ENCODE measurements at regions of chr16 and their contacts with region 1.

Region 1: GRCh38 chr16:89706507-89707263 is 5.2 kb upstream of the SPATA2L start:
- DNase-seq: no peak
- ATAC-seq: no peak
- H3K4me3 ChIP-seq: no peak overlapping the region
- H3K4me3 Mint-ChIP-seq: no peak overlapping the region
- H3K27ac ChIP-seq: no peak overlapping the region
- H3K27ac Mint-ChIP-seq: no peak overlapping the region
- H3K4me1 ChIP-seq: peaks cover 2 to 33% of the 10 kb centered on the region in 2 experiments
- H3K4me1 Mint-ChIP-seq: peaks cover 8 to 15% (median 12%) of the 10 kb centered on the region in 3 donors
- H3K27me3 ChIP-seq: peaks cover 0 to 3% of the 10 kb centered on the region in 2 experiments
- H3K27me3 Mint-ChIP-seq: no peaks in the 10 kb centered on the region

Region 2: DNA sequence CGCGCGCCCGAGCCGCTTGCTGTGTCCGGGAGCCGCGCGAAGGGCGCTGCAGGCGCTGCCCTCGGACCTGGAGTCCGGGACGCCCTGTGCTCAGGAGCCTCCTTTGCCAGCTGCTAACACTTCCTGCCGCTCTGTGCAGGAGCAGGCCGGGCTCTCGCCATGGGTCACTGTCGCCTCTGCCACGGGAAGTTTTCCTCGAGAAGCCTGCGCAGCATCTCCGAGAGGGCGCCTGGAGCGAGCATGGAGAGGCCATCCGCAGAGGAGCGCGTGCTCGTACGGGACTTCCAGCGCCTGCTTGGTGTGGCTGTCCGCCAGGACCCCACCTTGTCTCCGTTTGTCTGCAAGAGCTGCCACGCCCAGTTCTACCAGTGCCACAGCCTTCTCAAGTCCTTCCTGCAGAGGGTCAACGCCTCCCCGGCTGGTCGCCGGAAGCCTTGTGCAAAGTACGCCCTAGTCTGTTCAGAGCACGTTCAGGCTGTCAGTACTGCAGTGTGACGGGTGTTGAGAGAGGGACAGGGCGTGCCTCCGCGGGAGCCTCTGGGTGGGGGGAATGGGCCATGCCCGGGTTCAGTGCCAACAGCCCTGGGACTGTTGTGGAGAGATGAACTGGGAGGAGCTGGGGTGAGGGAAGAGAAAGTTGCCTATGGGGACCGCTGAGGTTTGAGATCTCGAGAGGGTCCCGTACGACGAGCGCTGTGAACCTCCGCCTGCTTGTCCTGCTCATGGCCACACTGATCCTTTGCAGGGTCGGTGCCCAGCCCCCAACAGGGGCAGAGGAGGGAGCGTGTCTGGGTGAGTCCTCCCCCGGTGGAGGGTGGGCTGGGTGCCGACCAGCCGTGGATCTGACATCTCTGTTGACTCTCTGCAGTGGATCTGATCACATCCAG is 15.9 kb after region 1 on chr16:
- CTCF ChIA-PET with region 1: interaction called in 1 of 2 experiments, 11 read pairs
- POLR2A ChIA-PET with region 1: no interaction called
- DNase-seq: peak; percentile 46 to 83 (median 68)
- ATAC-seq: peak; percentile 30 to 44 (median 39)
- H3K4me3 ChIP-seq: peak overlapping the region; percentile 70 to 81
- H3K4me3 Mint-ChIP-seq: peak overlapping the region; percentile 84 to 99 (median 96)
- H3K27ac ChIP-seq: peak overlapping the region; percentile 76
- H3K27ac Mint-ChIP-seq: peak overlapping the region; percentile 96 to 99
- H3K4me1 ChIP-seq: peaks cover 16 to 65% of the 10 kb centered on the region in 2 experiments
- H3K4me1 Mint-ChIP-seq: peaks cover 45 to 58% (median 50%) of the 10 kb centered on the region in 3 donors
- H3K27me3 ChIP-seq: no peaks in the 10 kb centered on the region
- H3K27me3 Mint-ChIP-seq: no peaks in the 10 kb centered on the region

Region 3: DNA sequence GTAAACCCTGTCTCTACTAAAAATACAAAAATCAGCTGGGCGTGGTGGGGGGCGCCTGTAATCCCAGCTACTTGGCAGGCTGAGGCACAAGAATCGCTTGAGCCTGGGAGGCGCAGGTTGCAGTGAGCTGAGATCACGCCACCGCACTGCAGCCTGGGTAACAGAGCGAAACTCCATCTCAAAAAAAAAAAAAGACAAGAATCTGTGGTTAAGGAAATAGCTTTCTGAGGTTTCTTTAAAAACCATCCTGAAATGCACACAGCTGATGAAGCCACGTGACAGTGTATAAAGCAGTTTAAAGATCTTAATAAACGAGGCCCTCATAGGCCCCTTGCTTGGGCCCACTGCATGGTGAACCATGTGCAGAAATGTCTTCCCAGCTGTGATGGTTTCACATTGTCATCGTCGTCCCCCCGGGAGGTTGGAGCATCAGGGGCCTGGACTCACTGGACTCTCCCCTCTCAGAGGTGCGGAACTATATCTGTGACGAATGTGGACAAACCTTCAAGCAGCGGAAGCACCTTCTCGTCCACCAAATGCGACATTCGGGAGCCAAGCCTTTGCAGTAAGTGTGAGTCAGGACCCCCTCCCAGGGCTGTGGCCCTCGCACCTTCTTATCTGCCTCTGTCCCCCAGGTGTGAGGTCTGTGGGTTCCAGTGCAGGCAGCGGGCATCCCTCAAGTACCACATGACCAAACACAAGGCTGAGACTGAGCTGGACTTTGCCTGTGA is 30.8 kb after region 1 on chr16:
- CTCF ChIA-PET with region 1: interaction called in 1 of 2 experiments, 12 read pairs
- POLR2A ChIA-PET with region 1: interaction called in 1 of 2 experiments, 3 read pairs
- DNase-seq: peak in 33 of 35 experiments; percentile 32 to 77 (median 50)
- ATAC-seq: peak; percentile 54 to 86 (median 61)
- H3K4me3 ChIP-seq: no peak overlapping the region
- H3K4me3 Mint-ChIP-seq: peak overlapping the region in 2 of 3 donors; percentile 3 to 53
- H3K27ac ChIP-seq: peak overlapping the region; percentile 36
- H3K27ac Mint-ChIP-seq: peak overlapping the region; percentile 65 to 80
- H3K4me1 ChIP-seq: peaks cover 21 to 71% of the 10 kb centered on the region in 2 experiments
- H3K4me1 Mint-ChIP-seq: peaks cover 44 to 64% (median 46%) of the 10 kb centered on the region in 3 donors
- H3K27me3 ChIP-seq: no peaks in the 10 kb centered on the region
- H3K27me3 Mint-ChIP-seq: no peaks in the 10 kb centered on the region

Region 4: DNA sequence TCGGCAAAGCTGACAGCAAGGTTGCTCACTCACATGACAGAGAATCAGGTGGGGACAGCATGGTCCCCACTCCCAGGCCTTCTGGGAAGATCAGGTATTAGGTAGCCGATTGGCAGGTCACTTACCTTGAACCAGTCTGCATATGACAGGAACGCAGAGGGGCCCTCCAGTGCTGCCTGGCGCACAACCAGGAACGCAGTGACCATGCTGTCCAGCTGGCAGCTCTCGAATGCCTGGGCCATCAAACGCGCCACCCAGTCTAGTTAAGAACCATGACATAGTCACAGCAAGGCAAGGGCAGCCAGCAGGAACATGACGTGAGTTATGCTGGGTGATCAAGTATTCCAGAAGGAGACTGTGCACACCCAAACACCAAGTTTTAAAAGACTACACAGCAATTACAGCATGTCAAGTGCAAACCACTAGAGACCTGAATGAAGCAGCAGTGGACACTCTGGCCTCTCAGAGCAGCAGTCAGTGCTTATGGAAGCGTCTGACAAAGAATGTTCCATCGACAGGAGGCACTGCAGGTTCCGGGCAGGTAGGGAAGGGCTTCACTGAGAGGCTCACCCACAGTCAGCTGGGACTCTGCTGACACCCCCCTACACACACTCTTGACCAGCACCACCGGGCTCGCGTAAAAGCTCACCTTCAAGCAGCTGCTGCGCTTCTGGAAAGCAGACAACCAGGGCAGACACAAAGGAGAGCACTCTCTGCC is 84.8 kb after region 1 on chr16:
- CTCF ChIA-PET with region 1: interaction called, 14 to 15 read pairs
- POLR2A ChIA-PET with region 1: no interaction called
- DNase-seq: no peak
- ATAC-seq: no peak
- H3K4me3 ChIP-seq: no peak overlapping the region
- H3K4me3 Mint-ChIP-seq: no peak overlapping the region
- H3K27ac ChIP-seq: no peak overlapping the region
- H3K27ac Mint-ChIP-seq: no peak overlapping the region
- H3K4me1 ChIP-seq: peaks cover 2 to 12% of the 10 kb centered on the region in 2 experiments
- H3K4me1 Mint-ChIP-seq: peaks cover 18 to 20% (median 18%) of the 10 kb centered on the region in 3 donors
- H3K27me3 ChIP-seq: no peaks in the 10 kb centered on the region
- H3K27me3 Mint-ChIP-seq: no peaks in the 10 kb centered on the region

Measured in T-cell (primary cell).